K562 (cell line): ENCODE measurements at regions of chr13 and their contacts with region 1.

Region 1: DNA sequence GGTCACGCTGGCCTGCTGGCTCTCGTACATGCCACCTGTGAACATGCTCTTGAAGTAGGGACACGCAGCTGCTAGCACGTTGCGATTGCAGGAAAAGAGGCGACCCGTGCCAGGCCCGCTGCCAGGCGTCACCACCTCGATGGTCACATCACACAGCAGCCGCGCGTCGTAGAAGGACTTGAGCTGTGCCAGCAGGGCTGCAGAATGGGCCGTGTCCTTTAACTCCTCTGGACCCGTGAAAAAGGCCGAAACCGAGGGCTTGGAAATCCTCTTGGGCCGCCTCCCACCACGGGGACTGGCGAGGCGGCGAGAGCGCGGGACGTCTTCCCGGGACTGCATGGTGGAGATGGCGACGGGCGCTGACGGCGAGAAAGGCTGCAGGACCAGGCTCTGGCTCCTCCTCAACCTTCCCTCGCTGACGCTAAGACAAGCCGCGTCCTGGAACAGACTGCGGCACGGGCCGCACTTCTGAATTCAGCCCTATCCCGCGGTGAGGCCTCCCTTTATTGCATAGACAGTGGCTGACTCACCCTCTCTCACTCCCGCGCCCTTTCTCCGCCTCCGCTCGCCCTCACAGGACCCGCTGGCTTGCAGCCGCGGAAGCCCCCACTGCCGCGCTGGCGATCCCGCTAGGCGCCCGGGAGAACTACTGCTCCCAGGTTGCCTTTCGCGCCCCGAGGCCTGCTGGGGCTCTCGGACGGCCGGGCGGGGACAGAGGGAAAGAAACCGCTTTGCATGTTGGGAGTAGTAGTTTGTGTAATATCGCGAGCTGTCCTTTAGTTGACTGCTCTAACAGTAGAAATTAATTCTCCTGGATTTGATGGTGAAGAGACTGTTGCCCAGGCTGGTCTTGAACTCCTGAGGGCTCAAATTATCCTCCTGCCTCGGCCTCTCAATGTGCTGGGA is at the start of gene KBTBD7:
- DNase-seq: peak; percentile 72 to 92 (median 79)
- ATAC-seq: peak; percentile 99
- H3K4me3 ChIP-seq: peak within 1 kb of the TSS; percentile 38
- H3K27ac ChIP-seq: peak within 1 kb of the TSS; percentile 75
- H3K4me1 ChIP-seq: peaks cover 4 to 11% of the 10 kb centered on the region in 2 experiments; a peak in 4 of 5 replicates
- H3K27me3 ChIP-seq: no peaks in the 10 kb centered on the region
- CTCF ChIP-seq: no peak
- EP300 ChIP-seq: no peak
- POLR2A ChIP-seq: peak; percentile 76
- RAD21 ChIP-seq: no peak
- polyA plus RNA-seq, gene KBTBD7: 1.8 to 2.3 TPM

Region 2: GRCh38 chr13:41132512-41133152 is 61.5 kb before region 1 on chr13 and contains the start of gene KBTBD6:
- CTCF ChIA-PET with region 1: no interaction called
- POLR2A ChIA-PET with region 1: no interaction called
- in situ Hi-C with region 1: loop called (anchors 5 kb)
- intact Hi-C with region 1: loop called (anchors 1 kb)
- DNase-seq: peak; percentile 76 to 97 (median 80)
- ATAC-seq: peak; percentile 88
- H3K4me3 ChIP-seq: peak within 1 kb of the TSS; percentile 54
- H3K27ac ChIP-seq: peak within 1 kb of the TSS; percentile 84
- H3K4me1 ChIP-seq: peaks cover 11 to 12% of the 10 kb centered on the region in 2 experiments; a peak in 4 of 5 replicates
- H3K27me3 ChIP-seq: no peaks in the 10 kb centered on the region
- CTCF ChIP-seq: no peak; a peak in 1 of 6 replicates
- EP300 ChIP-seq: 0 out of 2 replicates have a peak, but pooled peaks have one; percentile 15
- POLR2A ChIP-seq: peak; percentile 71
- RAD21 ChIP-seq: no peak
- polyA plus RNA-seq, gene KBTBD6: 2.1 to 2.8 TPM

Region 3: GRCh38 chr13:41145146-41145908 is 48.8 kb before region 1 on chr13:
- CTCF ChIA-PET with region 1: no interaction called
- POLR2A ChIA-PET with region 1: no interaction called
- in situ Hi-C with region 1: no loop called
- intact Hi-C with region 1: loop called (anchors 5 kb)
- DNase-seq: no peak
- ATAC-seq: no peak
- H3K4me3 ChIP-seq: no peak overlapping the region
- H3K27ac ChIP-seq: no peak overlapping the region
- H3K4me1 ChIP-seq: no peaks in the 10 kb centered on the region
- H3K27me3 ChIP-seq: no peaks in the 10 kb centered on the region
- CTCF ChIP-seq: no peak
- EP300 ChIP-seq: no peak
- POLR2A ChIP-seq: no peak
- RAD21 ChIP-seq: no peak

Region 4: DNA sequence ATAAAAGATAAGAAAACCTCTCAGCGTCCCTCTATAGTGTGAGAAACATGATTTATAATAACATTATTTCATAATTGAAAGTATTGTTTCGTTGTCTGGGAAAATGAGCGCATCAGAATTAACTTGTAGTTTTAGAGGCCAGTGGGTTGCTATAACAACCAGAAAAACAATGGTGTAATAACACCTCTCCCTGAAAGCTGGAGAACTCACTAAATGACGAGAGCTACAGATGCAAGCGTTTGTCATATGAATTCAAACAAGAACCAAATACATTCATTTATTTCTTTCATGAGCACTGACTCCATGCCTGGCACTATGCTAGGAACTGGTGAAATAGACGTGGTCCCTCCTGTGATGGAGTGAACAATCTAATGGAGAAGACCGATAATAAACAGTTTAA is 16.1 kb before region 1 on chr13:
- CTCF ChIA-PET with region 1: no interaction called
- POLR2A ChIA-PET with region 1: no interaction called
- in situ Hi-C with region 1: no loop called
- intact Hi-C with region 1: no loop called
- DNase-seq: no peak
- ATAC-seq: no peak
- H3K4me3 ChIP-seq: no peak overlapping the region
- H3K27ac ChIP-seq: no peak overlapping the region
- H3K4me1 ChIP-seq: peaks cover 0 to 4% of the 10 kb centered on the region in 2 experiments; a peak in 1 of 5 replicates
- H3K27me3 ChIP-seq: no peaks in the 10 kb centered on the region
- CTCF ChIP-seq: no peak
- EP300 ChIP-seq: no peak
- POLR2A ChIP-seq: no peak
- RAD21 ChIP-seq: no peak

Region 5: GRCh38 chr13:41241626-41242025 is 47.5 kb after region 1 on chr13:
- CTCF ChIA-PET with region 1: no interaction called
- POLR2A ChIA-PET with region 1: no interaction called
- in situ Hi-C with region 1: no loop called
- intact Hi-C with region 1: no loop called
- DNase-seq: no peak
- ATAC-seq: no peak
- H3K4me3 ChIP-seq: no peak overlapping the region
- H3K27ac ChIP-seq: no peak overlapping the region
- H3K4me1 ChIP-seq: no peaks in the 10 kb centered on the region
- H3K27me3 ChIP-seq: no peaks in the 10 kb centered on the region
- CTCF ChIP-seq: no peak
- EP300 ChIP-seq: no peak
- POLR2A ChIP-seq: no peak
- RAD21 ChIP-seq: no peak